ENCODE measurements at regions of chrX and their contacts with region 1.

Region 1: GRCh38 chrX:101799387-101799786 is 132.4 kb downstream of the ZMAT1 start:
- DNase-seq: peak; percentile 84

Region 2: GRCh38 chrX:101729991-101730390 is 69.4 kb before region 1 on chrX:
- intact Hi-C with region 1: loop called in 1 of 2 experiments (anchors 2 kb)
- DNase-seq: no peak

Measured in posterior vena cava (tissue), 2 donors.